ENCODE measurements at regions of chr11 and their contacts with region 1.

Region 1: DNA sequence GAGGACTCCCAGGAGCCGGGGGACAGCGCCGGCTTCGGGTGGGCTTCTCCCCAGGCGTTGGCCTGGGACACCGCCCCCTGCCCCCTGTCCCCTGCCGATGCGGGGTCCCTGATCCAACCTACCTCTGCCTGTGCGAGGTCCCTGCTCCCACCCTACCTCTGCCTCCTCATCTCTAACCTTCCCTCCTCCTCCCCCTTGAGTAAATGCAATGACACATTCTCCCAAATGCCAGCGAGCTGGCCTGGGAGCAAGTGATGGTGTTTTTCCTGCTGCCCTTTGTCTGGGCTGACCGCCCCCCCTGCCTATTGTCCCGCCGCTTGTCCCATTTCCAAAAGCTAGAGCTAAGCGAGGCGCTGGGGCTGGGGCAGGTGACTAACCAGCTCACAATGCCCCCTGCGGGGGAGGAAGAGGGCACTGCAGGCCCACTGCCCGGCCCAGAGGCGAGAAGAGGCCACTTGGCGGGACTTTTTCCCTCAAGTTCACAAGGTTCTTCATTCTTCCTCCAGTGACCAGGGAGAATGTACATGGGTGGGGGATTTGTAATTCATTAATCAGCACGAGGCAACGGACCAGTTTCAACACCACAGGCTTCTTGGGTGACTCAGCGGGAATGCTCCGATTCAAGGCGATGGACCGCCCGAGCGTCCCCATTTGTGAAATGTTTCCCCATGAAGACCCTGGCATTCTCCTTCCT is 674 bp upstream of the CLCF1 start:
- DNase-seq: peak; percentile 77
- H3K4me3 ChIP-seq: peak overlapping the region; percentile 67
- H3K27ac ChIP-seq: no peak overlapping the region
- H3K4me1 ChIP-seq: peaks cover 40% of the 10 kb centered on the region
- CTCF ChIP-seq: peak; percentile 78

Region 2: GRCh38 chr11:67332081-67332691 is 41.9 kb before region 1 on chr11:
- CTCF ChIA-PET with region 1: no interaction called
- POLR2A ChIA-PET with region 1: no interaction called
- intact Hi-C with region 1: no loop called
- DNase-seq: no peak
- H3K4me3 ChIP-seq: no peak overlapping the region
- H3K27ac ChIP-seq: no peak overlapping the region
- H3K4me1 ChIP-seq: no peaks in the 10 kb centered on the region
- CTCF ChIP-seq: no peak

Region 3: GRCh38 chr11:67353317-67354074 is 20.6 kb before region 1 on chr11 and contains the start of gene POLD4:
- CTCF ChIA-PET with region 1: interaction called, 12 read pairs
- POLR2A ChIA-PET with region 1: interaction called, 106 read pairs
- intact Hi-C with region 1: loop called (anchors 1 kb)
- DNase-seq: peak; percentile 99
- H3K4me3 ChIP-seq: peak within 1 kb of the TSS; percentile 77
- H3K27ac ChIP-seq: peak within 1 kb of the TSS; percentile 93
- H3K4me1 ChIP-seq: peaks cover 78% of the 10 kb centered on the region
- CTCF ChIP-seq: no peak
- total RNA-seq, gene POLD4: 146 and 153 TPM in 2 replicates

Region 4: GRCh38 chr11:67470337-67471007 is 96.4 kb after region 1 on chr11:
- CTCF ChIA-PET with region 1: no interaction called
- POLR2A ChIA-PET with region 1: no interaction called
- intact Hi-C with region 1: no loop called
- DNase-seq: no peak
- H3K4me3 ChIP-seq: no peak overlapping the region
- H3K27ac ChIP-seq: no peak overlapping the region
- H3K4me1 ChIP-seq: peaks cover 45% of the 10 kb centered on the region
- CTCF ChIP-seq: no peak

Region 5: GRCh38 chr11:69048718-69049489 is 1674.8 kb after region 1 on chr11 and contains the start of gene TPCN2:
- CTCF ChIA-PET with region 1: no interaction called
- POLR2A ChIA-PET with region 1: no interaction called
- intact Hi-C with region 1: no loop called
- DNase-seq: peak; percentile 97
- H3K4me3 ChIP-seq: peak within 1 kb of the TSS; percentile 92
- H3K27ac ChIP-seq: peak within 1 kb of the TSS; percentile 96
- H3K4me1 ChIP-seq: peaks cover 79% of the 10 kb centered on the region
- CTCF ChIP-seq: no peak
- total RNA-seq, gene TPCN2: 21.5 and 30.0 TPM in 2 replicates

Measured in OCI-LY7 (cell line).